Naive thymus-derived CD4-positive, alpha-beta T cell (primary cell): ENCODE measurements at regions of chr19 and their contacts with region 1.

Region 1: GRCh38 chr19:3100081-3100864 is 6.1 kb downstream of the GNA11 start:
- DNase-seq: no peak
- ATAC-seq: no peak
- H3K4me3 ChIP-seq: no peak overlapping the region
- H3K4me3 Mint-ChIP-seq: peak overlapping the region in 5 of 10 donors; percentile 17 to 97 (median 61)
- H3K27ac ChIP-seq: no peak overlapping the region
- H3K27ac Mint-ChIP-seq: no peak overlapping the region
- H3K4me1 ChIP-seq: peaks cover 18 to 45% of the 10 kb centered on the region in 2 donors
- H3K4me1 Mint-ChIP-seq: peaks cover 20 to 48% (median 30%) of the 10 kb centered on the region in 7 donors
- H3K27me3 ChIP-seq: no peaks in the 10 kb centered on the region
- H3K27me3 Mint-ChIP-seq: peaks cover 0 to 33% (median 5%) of the 10 kb centered on the region in 5 donors

Region 2: GRCh38 chr19:3075895-3076431 is 24.3 kb before region 1 on chr19:
- CTCF ChIA-PET with region 1: interaction called, 110 read pairs
- POLR2A ChIA-PET with region 1: interaction called, 7 read pairs
- intact Hi-C with region 1: loop called (anchors 1 to 2 kb)
- DNase-seq: peak; percentile 63 to 85 (median 71)
- ATAC-seq: peak; percentile 99
- H3K4me3 ChIP-seq: no peak overlapping the region
- H3K4me3 Mint-ChIP-seq: peak overlapping the region in 4 of 10 donors; percentile 44 to 68 (median 50)
- H3K27ac ChIP-seq: no peak overlapping the region
- H3K27ac Mint-ChIP-seq: no peak overlapping the region
- H3K4me1 ChIP-seq: peaks cover 0 to 9% of the 10 kb centered on the region in 2 donors
- H3K4me1 Mint-ChIP-seq: peaks cover 0 to 10% (median 4%) of the 10 kb centered on the region in 7 donors
- H3K27me3 ChIP-seq: no peaks in the 10 kb centered on the region
- H3K27me3 Mint-ChIP-seq: peaks cover 0 to 6% (median 0%) of the 10 kb centered on the region in 5 donors